ENCODE measurements at regions of chr15 and their contacts with region 1.

Region 1: GRCh38 chr15:62495670-62496614 is 330.9 kb upstream of the C2CD4B start:
- DNase-seq: peak; percentile 21
- H3K4me3 ChIP-seq: no peak overlapping the region
- H3K27ac ChIP-seq: no peak overlapping the region
- H3K4me1 ChIP-seq: peaks cover 4% of the 10 kb centered on the region
- H3K27me3 ChIP-seq: no peaks in the 10 kb centered on the region
- CTCF ChIP-seq: no peak

Region 2: DNA sequence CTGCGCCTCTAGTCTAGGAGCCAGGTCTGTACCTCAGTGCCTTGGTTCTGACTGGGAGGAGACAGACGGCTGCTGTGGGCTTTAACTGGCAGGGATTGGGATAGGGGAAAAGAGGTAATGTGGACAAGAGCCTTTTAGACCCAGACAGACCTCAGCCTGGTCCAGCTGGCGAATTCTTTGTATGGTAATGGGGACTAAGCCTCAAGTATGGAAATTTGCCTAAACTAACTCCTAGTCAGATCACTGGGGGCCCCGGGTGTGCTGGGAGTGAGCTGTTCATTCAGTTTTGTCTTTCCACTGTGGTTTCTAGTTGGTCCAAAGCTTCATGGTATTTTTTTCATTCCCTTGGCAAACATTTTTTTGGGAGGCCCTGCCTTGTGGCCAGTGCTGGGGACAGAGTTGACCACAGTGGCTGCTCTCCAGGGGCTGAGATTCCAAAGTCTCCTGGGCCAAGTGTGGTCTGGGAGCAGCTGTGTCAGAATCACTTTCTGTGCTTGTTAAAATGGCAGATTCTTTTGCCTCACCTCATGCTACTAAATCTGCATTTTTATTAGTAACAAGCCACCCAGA is 69.5 kb before region 1 on chr15:
- CTCF ChIA-PET with region 1: interaction called, 13 read pairs
- dilution Hi-C with region 1: no loop called
- in situ Hi-C with region 1: no loop called
- intact Hi-C with region 1: no loop called
- DNase-seq: no peak
- H3K4me3 ChIP-seq: no peak overlapping the region
- H3K27ac ChIP-seq: no peak overlapping the region
- H3K4me1 ChIP-seq: no peaks in the 10 kb centered on the region
- H3K27me3 ChIP-seq: no peaks in the 10 kb centered on the region
- CTCF ChIP-seq: no peak

Measured in mammary epithelial cell (primary cell).